Heart left ventricle (tissue), 16 donors: ENCODE measurements at regions of chr10 and their contacts with region 1.

Region 1: GRCh38 chr10:43846187-43846680 is 197.6 kb upstream of the ZNF32 start:
- DNase-seq: peak in 4 of 5 donors; percentile 45 to 78 (median 70)
- ATAC-seq: peak in 3 of 4 donors; percentile 61 to 81 (median 64)
- H3K4me3 ChIP-seq: peak overlapping the region in 5 of 12 donors; percentile 0 to 31 (median 8)
- H3K27ac ChIP-seq: peak overlapping the region; percentile 43 to 91 (median 67)
- H3K4me1 ChIP-seq: peaks cover 0 to 36% (median 15%) of the 10 kb centered on the region in 12 donors
- H3K27me3 ChIP-seq: no peaks in the 10 kb centered on the region
- CTCF ChIP-seq: peak in 3 of 12 donors; percentile 7 to 28 (median 23)
- POLR2A ChIP-seq: no peak

Region 2: GRCh38 chr10:43775384-43775783 is 70.8 kb before region 1 on chr10:
- intact Hi-C with region 1: loop called in 1 of 10 experiments (anchors 10 kb)
- DNase-seq: no peak
- ATAC-seq: no peak
- H3K4me3 ChIP-seq: no peak overlapping the region
- H3K27ac ChIP-seq: no peak overlapping the region
- H3K4me1 ChIP-seq: peaks cover 0 to 3% (median 0%) of the 10 kb centered on the region in 12 donors
- H3K27me3 ChIP-seq: no peaks in the 10 kb centered on the region
- CTCF ChIP-seq: no peak
- POLR2A ChIP-seq: no peak